ENCODE measurements at regions of chr2 and their contacts with region 1.

Region 1: DNA sequence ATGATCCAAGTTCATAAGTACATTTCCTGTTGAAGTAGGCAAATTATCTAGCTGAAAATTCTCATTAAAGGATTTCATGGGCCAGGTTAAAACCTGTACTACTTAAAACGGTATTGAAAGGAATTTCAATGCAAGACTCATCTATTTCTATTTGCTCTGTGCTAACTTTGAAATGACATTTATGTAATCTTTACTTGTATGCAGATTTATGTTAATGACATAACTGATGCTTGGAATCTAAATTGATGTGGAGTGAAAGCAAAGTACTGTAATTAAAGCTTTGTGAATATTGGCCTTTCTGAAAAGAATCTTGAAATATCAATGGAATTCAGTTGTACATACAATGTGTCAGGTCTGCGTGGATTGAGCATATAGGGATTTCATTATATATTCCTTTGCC is 390.0 kb downstream of the CPS1 start:
- DNase-seq: no peak

Region 2: GRCh38 chr2:210971431-210971830 is 25.0 kb after region 1 on chr2:
- intact Hi-C with region 1: no loop called
- DNase-seq: no peak

Region 3: DNA sequence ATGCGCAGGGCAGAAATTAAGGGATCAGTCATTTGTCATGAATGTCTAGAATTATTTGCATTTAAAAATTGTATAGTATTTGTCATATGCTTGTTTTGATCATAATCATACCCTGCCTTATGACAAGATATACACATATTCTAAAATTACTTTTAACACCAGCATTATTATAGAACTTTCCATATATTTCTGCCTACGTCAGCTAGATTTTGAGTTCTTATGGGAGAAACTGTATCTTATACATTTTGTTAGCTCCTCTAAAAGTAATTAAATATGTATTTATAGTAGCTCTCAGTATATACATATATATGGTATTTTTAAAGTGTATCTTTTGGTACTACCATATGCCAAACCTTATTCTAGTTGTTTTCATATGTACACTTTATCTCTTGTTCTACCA is 51.9 kb after region 1 on chr2:
- intact Hi-C with region 1: loop called in 1 of 2 experiments (anchors 2 kb)
- DNase-seq: no peak